Activated naive CD4-positive, alpha-beta T cell treated with anti-CD3 and anti-CD28 coated beads for 36 hours (primary cell): ENCODE measurements at regions of chr11 and their contacts with region 1.

Region 1: GRCh38 chr11:85947431-85948272 is 92.5 kb downstream of the CCDC83 start:
- DNase-seq: peak; percentile 62
- H3K4me3 Mint-ChIP-seq: peak overlapping the region; percentile 1
- H3K27ac Mint-ChIP-seq: peak overlapping the region; percentile 87
- H3K4me1 Mint-ChIP-seq: peaks cover 46% of the 10 kb centered on the region
- H3K27me3 Mint-ChIP-seq: no peaks in the 10 kb centered on the region

Region 2: DNA sequence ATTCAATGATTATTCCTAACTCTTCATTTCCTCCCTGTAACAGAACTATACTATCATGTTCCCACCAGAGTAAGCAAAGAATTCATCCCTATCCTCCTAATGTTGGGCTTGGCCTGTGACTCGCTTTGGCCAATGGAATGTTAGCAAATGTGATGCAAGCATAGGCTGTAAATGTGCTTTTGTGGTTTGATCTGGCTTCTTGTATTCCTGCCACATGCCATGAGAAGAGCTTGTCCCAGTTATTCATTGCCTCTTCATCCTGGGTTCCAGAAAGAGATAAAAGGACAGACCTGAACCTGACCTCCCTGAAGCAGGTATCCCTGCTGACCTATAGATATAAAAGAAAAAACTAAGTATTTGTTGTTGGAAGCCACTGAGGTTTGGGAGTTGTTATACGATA is 187.7 kb before region 1 on chr11:
- CTCF ChIA-PET with region 1: no interaction called
- intact Hi-C with region 1: loop called (anchors 2 kb)
- DNase-seq: no peak
- H3K4me3 Mint-ChIP-seq: no peak overlapping the region
- H3K27ac Mint-ChIP-seq: no peak overlapping the region
- H3K4me1 Mint-ChIP-seq: peaks cover 65% of the 10 kb centered on the region
- H3K27me3 Mint-ChIP-seq: no peaks in the 10 kb centered on the region

Region 3: DNA sequence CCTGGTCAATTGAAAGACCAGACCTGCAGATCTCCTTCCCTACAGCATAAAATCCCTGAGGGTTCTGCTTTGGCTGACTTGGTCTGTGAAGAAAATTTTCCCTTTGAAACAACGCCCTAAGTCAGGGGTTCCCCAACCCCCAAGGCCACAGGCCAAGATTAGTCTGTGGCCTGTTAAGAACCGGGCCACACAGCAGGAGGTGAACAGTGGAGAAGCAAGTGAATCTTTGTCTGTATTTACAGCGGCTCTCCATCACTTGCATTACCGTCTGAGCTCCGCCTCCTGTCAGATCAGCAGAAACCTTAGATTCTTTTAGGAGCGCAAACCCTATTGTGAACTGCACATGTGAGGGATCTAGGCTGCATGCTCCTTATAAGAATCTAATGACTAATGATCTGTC is 54.3 kb before region 1 on chr11:
- CTCF ChIA-PET with region 1: no interaction called
- intact Hi-C with region 1: no loop called
- DNase-seq: no peak
- H3K4me3 Mint-ChIP-seq: no peak overlapping the region
- H3K27ac Mint-ChIP-seq: no peak overlapping the region
- H3K4me1 Mint-ChIP-seq: no peaks in the 10 kb centered on the region
- H3K27me3 Mint-ChIP-seq: no peaks in the 10 kb centered on the region

Region 4: GRCh38 chr11:86068951-86069407 is 121.3 kb after region 1 on chr11 and contains the start of gene PICALM:
- CTCF ChIA-PET with region 1: no interaction called
- intact Hi-C with region 1: loop called (anchors 1 kb)
- DNase-seq: peak; percentile 99
- H3K4me3 Mint-ChIP-seq: peak within 1 kb of the TSS; percentile 95
- H3K27ac Mint-ChIP-seq: peak within 1 kb of the TSS; percentile 95
- H3K4me1 Mint-ChIP-seq: peaks cover 29% of the 10 kb centered on the region
- H3K27me3 Mint-ChIP-seq: no peaks in the 10 kb centered on the region
- total RNA-seq, gene PICALM: 38.6 to 42.3 TPM

Region 5: DNA sequence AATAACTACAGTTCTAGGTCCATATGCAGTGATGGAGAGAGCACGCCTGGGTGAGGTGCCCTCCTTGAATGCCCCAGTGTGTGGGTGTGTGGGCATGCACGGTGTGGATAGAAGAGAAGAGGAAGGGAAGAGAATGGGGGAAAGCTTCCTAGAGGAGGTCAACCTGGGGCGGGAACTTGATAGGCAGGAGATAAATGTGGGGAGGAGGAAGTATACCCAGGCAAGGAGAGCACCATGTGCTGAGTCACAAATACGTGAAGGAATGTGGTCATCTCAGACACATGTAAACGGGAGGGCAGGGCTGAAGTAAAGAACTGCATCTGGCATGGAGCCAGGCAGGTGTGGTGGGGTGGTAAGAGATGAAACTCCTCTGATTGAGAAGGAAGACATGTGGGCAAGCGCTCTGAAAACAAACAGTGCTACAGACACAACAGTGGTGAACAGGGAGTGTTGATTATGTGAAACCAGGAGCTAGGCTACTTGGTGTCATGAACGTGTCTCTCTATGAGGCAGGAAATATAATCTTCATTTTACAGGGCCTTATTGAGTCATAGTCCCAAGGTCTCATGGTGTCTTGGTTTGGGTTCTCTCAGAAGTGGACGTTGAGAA is 235.4 kb after region 1 on chr11:
- CTCF ChIA-PET with region 1: no interaction called
- intact Hi-C with region 1: no loop called
- DNase-seq: peak; percentile 68
- H3K4me3 Mint-ChIP-seq: no peak overlapping the region
- H3K27ac Mint-ChIP-seq: no peak overlapping the region
- H3K4me1 Mint-ChIP-seq: peaks cover 3% of the 10 kb centered on the region
- H3K27me3 Mint-ChIP-seq: no peaks in the 10 kb centered on the region

Region 6: DNA sequence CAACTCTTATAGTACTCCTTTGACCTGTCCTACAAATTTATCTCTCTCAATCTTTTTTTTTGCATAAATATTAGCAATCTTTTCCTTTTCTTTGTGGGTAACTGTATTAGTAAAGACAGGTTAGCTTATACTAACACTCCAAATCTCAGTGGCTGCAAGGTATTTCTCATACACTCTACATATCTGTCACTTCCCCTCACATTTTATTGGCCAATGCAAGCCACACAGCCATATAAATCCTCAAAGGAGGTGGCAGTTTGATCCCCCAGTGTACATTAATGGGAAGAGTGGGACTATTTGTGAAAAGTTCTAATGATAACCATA is 254.3 kb after region 1 on chr11:
- CTCF ChIA-PET with region 1: no interaction called
- intact Hi-C with region 1: loop called (anchors 1 kb)
- DNase-seq: peak; percentile 42
- H3K4me3 Mint-ChIP-seq: no peak overlapping the region
- H3K27ac Mint-ChIP-seq: no peak overlapping the region
- H3K4me1 Mint-ChIP-seq: no peaks in the 10 kb centered on the region
- H3K27me3 Mint-ChIP-seq: no peaks in the 10 kb centered on the region

Region 7: DNA sequence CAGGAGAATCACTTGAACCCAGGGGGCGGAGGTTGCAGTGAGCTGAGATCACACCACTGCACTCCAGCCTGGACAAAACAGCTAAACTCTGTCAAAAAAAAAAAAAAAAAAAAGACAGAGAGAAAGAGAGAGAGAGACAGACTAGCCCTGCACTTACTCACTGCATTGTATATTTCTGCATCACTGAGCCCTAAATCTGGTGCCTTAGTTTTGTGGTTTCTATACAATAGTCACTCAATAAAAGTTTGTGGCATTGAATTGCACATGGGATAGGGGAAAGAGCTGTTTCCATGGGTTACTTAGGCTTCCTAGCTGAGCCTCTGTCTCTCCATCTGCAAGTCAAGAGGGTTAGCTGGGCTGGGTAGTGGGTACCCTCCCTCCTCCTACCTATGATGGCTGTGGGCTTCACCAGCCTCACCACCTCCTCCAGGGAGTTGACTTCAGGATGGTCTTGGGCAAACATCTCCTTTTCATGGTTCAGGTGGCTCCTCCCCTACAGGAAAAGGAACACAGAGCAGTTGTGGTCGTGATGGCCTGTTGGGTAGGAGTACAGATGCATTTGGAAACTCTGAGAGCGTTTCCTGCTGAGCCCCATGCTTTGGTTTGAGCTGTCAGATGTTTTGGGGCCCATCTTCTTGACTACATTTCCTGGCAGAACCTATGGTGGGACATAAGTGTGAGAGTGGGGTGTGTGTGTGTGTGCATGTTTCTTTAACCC is 500.3 kb after region 1 on chr11:
- CTCF ChIA-PET with region 1: no interaction called
- intact Hi-C with region 1: loop called (anchors 2 kb)
- DNase-seq: peak; percentile 63
- H3K4me3 Mint-ChIP-seq: no peak overlapping the region
- H3K27ac Mint-ChIP-seq: no peak overlapping the region
- H3K4me1 Mint-ChIP-seq: peaks cover 24% of the 10 kb centered on the region
- H3K27me3 Mint-ChIP-seq: no peaks in the 10 kb centered on the region

Region 8: DNA sequence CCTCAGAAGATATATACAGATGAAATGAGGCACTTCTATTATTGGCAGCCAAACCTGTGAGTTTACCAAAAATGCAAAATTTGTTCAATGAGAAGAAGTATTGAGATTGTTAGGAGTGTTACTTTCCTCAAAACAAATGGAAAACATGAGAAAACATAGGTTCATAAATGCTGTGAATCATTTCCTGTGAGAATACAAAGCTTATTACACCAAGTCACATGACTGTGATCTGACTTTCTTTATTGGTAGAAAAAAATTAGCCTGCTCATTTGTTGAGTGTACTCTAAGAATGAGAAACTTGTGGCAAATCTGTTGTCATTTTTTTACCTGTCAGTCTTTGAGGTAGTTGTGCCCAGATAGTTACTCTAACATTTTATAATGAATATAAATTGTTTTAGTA is 1305.2 kb after region 1 on chr11:
- CTCF ChIA-PET with region 1: no interaction called
- intact Hi-C with region 1: loop called (anchors 5 kb)
- DNase-seq: no peak
- H3K4me3 Mint-ChIP-seq: no peak overlapping the region
- H3K27ac Mint-ChIP-seq: peak overlapping the region; percentile 14
- H3K4me1 Mint-ChIP-seq: peaks cover 29% of the 10 kb centered on the region
- H3K27me3 Mint-ChIP-seq: no peaks in the 10 kb centered on the region